ENCODE measurements at regions of chr12 and their contacts with region 1.

Region 1: GRCh38 chr12:6423267-6424007 is 21.3 kb upstream of the CD27 start:
- DNase-seq: peak; percentile 92
- H3K4me3 ChIP-seq: no peak overlapping the region
- H3K27ac ChIP-seq: no peak overlapping the region
- H3K4me1 ChIP-seq: no peaks in the 10 kb centered on the region
- H3K27me3 ChIP-seq: no peaks in the 10 kb centered on the region
- CTCF ChIP-seq: peak; percentile 72 to 84
- POLR2A ChIP-seq: no peak

Region 2: GRCh38 chr12:6394398-6394797 is 29.0 kb before region 1 on chr12:
- CTCF ChIA-PET with region 1: no interaction called
- POLR2A ChIA-PET with region 1: no interaction called
- dilution Hi-C with region 1: no loop called
- intact Hi-C with region 1: no loop called
- DNase-seq: no peak
- H3K4me3 ChIP-seq: no peak overlapping the region
- H3K27ac ChIP-seq: no peak overlapping the region
- H3K4me1 ChIP-seq: peaks cover 2% of the 10 kb centered on the region
- H3K27me3 ChIP-seq: no peaks in the 10 kb centered on the region
- CTCF ChIP-seq: no peak
- POLR2A ChIP-seq: no peak

Region 3: DNA sequence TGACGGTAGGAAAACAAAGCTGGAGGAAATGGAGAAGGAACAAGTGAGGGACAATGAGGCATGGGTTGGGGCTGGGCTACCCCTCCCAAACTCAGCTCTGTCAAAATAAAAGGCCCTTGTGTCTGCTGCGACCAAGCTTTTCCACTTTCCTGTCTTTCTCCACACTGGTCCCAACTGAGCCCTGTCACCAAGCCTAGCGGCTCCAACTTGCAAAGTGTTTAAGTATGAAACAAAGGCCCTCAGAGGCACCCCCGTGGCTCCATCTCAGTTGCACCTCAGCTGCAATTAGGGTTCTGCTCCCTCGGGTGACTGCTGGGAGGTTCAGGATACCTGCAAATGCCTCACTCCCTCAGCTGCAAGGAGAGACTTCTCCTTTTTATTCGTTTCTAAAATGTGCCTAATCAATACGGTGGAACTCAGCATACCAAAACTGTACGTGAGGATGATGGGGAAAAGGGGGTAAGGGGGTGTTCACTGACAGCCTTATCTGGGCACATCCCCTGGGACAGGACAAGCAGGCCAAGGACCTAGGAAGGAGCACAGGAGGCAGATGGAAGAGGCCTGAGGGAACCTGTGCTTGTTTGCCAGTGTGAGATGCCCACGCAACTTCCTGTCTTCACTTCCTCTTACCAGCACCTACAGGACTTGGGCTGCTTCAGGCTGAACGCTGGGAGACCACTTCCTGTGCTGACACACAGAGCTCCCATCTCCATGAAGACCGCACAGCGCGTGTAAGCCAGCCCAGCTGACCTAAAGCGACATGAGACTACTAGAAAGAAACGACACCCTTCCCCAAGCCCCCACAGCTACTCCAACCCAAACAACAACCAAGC is 38.2 kb after region 1 on chr12:
- CTCF ChIA-PET with region 1: interaction called, 147 read pairs
- POLR2A ChIA-PET with region 1: interaction called, 3 read pairs
- dilution Hi-C with region 1: no loop called
- intact Hi-C with region 1: loop called (anchors 1 kb)
- DNase-seq: no peak
- H3K4me3 ChIP-seq: no peak overlapping the region
- H3K27ac ChIP-seq: no peak overlapping the region
- H3K4me1 ChIP-seq: peaks cover 13% of the 10 kb centered on the region
- H3K27me3 ChIP-seq: no peaks in the 10 kb centered on the region
- CTCF ChIP-seq: no peak
- POLR2A ChIP-seq: no peak

Region 4: GRCh38 chr12:6493497-6494257 is 70.2 kb after region 1 on chr12 and contains the start of gene NCAPD2:
- CTCF ChIA-PET with region 1: no interaction called
- POLR2A ChIA-PET with region 1: no interaction called
- dilution Hi-C with region 1: no loop called
- intact Hi-C with region 1: loop called (anchors 1 kb)
- DNase-seq: peak; percentile 98
- H3K4me3 ChIP-seq: peak within 1 kb of the TSS; percentile 82 to 92 (median 86)
- H3K27ac ChIP-seq: peak within 1 kb of the TSS; percentile 95
- H3K4me1 ChIP-seq: peaks cover 20% of the 10 kb centered on the region
- H3K27me3 ChIP-seq: no peaks in the 10 kb centered on the region
- CTCF ChIP-seq: peak; percentile 21 to 35
- POLR2A ChIP-seq: no peak
- total RNA-seq, gene NCAPD2: 77.3 and 90.1 TPM in 2 replicates

Region 5: GRCh38 chr12:6533923-6534694 is 110.7 kb after region 1 on chr12 and contains the start of gene GAPDH:
- CTCF ChIA-PET with region 1: interaction called, 56 read pairs
- POLR2A ChIA-PET with region 1: no interaction called
- dilution Hi-C with region 1: no loop called
- intact Hi-C with region 1: loop called (anchors 1 kb)
- DNase-seq: peak; percentile 95
- H3K4me3 ChIP-seq: peak within 1 kb of the TSS; percentile 68 to 70 (median 68)
- H3K27ac ChIP-seq: peak within 1 kb of the TSS; percentile 73
- H3K4me1 ChIP-seq: peaks cover 34% of the 10 kb centered on the region
- H3K27me3 ChIP-seq: no peaks in the 10 kb centered on the region
- CTCF ChIP-seq: no peak
- POLR2A ChIP-seq: peak; percentile 99
- total RNA-seq, gene GAPDH: 4,245 and 4,648 TPM in 2 replicates

Region 6: DNA sequence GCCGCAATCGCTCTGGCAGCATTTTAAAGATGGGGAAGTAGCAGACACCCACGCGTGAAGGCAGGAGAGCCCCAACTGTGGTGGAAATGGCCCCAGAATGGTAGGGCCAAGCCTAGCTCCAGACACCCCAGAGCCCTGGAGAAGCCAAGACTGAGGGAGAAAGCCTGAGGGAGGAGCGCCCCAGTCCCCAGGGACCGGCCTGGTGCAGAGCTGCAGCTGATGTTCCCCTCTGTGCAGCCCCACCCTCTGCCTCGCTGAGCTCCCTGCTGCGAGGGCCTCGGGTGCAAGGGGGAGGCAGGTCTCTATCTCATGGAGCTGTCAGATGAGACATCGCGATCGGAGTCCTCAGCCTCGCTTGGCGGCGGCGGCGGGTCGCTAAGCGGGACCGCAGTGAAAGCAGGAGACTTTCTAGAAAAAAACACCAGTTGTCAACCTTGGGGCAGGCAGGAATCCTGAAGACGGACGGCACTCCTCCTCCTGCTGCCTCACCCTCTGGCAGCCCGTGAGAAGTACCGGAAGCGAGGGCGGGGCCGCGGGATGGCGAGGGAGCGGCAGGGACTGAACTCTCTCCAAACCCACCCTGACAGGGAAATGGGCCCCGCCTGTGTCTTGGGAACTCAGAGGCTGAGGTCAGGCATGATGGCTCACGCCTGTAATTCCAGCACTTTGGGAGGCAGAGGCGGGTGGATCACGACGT is 116.9 kb after region 1 on chr12:
- CTCF ChIA-PET with region 1: interaction called, 56 read pairs
- POLR2A ChIA-PET with region 1: no interaction called
- dilution Hi-C with region 1: no loop called
- intact Hi-C with region 1: loop called (anchors 1 kb)
- DNase-seq: peak; percentile 73
- H3K4me3 ChIP-seq: no peak overlapping the region
- H3K27ac ChIP-seq: no peak overlapping the region
- H3K4me1 ChIP-seq: peaks cover 39% of the 10 kb centered on the region
- H3K27me3 ChIP-seq: no peaks in the 10 kb centered on the region
- CTCF ChIP-seq: no peak
- POLR2A ChIP-seq: no peak

Region 7: GRCh38 chr12:6554168-6555017 is 131.0 kb after region 1 on chr12:
- CTCF ChIA-PET with region 1: interaction called, 4 read pairs
- POLR2A ChIA-PET with region 1: no interaction called
- dilution Hi-C with region 1: no loop called
- intact Hi-C with region 1: loop called (anchors 1 kb)
- DNase-seq: peak; percentile 80
- H3K4me3 ChIP-seq: peak overlapping the region; percentile 67 to 86 (median 67)
- H3K27ac ChIP-seq: peak overlapping the region; percentile 15
- H3K4me1 ChIP-seq: peaks cover 44% of the 10 kb centered on the region
- H3K27me3 ChIP-seq: no peaks in the 10 kb centered on the region
- CTCF ChIP-seq: peak; percentile 57 to 84
- POLR2A ChIP-seq: no peak